Endothelial cell of umbilical vein (primary cell): ENCODE measurements at regions of chr1 and their contacts with region 1.

Region 1: GRCh38 chr1:19651141-19651737 is 7.1 kb downstream of the NBL1 start:
- DNase-seq: peak; percentile 49
- H3K4me3 ChIP-seq: no peak overlapping the region
- H3K27ac ChIP-seq: peak overlapping the region; percentile 65
- H3K4me1 ChIP-seq: peaks cover 14% of the 10 kb centered on the region
- H3K27me3 ChIP-seq: no peaks in the 10 kb centered on the region
- CTCF ChIP-seq: peak; percentile 78 to 85
- POLR2A ChIP-seq: no peak

Region 2: DNA sequence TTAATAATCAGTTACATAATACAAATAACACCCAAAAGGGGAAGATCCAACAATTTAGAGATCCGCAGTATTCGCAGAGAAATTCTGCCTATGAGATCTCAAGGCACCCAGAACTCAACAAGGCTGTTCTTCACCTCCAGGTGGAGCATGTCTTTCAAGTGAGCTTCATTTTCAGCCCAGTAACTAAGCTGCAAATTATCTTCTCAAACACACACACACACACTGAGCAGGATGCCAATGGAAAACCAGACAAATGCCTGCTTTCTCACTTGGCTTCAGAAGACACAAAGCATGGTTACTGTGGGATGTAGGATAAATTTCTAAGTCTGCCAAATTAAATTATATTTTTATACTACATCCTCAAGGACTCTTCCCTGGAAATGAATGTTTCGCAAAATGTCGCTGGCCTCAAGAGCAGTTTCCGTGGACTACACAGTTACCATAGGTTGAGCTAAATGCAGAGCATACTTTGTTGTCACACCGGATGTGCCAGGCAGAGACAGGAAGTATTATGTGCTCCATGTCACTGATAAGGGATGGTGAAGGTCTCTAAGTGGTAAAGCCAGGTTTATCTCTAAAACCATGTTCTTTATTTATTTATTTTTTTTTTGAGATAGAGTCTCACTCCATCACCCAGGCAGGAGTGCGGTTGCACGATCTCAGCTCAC is 471.5 kb before region 1 on chr1:
- CTCF ChIA-PET with region 1: interaction called, 13 read pairs
- POLR2A ChIA-PET with region 1: no interaction called
- dilution Hi-C with region 1: no loop called
- intact Hi-C with region 1: loop called (anchors 1 kb)
- DNase-seq: peak; percentile 39
- H3K4me3 ChIP-seq: no peak overlapping the region
- H3K27ac ChIP-seq: no peak overlapping the region
- H3K4me1 ChIP-seq: no peaks in the 10 kb centered on the region
- H3K27me3 ChIP-seq: no peaks in the 10 kb centered on the region
- CTCF ChIP-seq: peak in 1 of 2 donors; percentile 21
- POLR2A ChIP-seq: no peak

Region 3: DNA sequence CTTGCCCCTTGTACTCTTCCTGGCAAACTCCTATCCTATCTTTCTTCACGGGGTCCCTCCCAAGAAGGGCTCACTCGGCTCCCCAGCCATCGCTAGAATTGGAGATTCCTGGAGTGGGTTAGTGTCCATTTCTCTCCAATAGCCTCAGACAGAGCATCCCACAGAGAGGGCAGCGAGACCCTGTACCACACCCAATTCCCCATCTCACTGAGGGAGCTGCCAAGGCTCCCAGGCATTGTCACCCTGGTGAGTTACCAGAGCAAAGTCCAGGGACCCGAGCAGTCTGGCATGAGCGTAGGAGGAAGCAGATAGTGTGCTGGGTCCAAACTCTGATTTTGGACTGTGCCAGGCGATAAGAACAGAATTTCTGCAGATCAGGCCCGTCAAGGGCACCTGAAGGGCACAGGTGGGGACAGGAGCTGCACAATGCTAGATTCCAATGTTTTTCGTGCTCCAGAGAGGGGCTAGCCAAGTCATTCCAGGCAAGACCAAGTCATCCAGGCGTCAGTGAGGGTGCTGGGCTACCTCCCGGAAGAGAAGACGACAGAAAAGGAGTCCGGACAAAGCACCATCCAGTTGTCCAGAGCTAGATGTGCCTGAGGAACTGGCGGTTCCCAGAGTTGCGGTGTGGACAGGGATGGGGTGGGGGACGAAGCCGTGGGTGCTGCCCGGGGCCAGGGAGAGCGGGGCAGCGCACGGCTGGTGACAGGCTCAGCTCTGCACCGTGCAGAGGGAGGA is 378.0 kb before region 1 on chr1:
- CTCF ChIA-PET with region 1: interaction called, 6 read pairs
- POLR2A ChIA-PET with region 1: no interaction called
- dilution Hi-C with region 1: no loop called
- intact Hi-C with region 1: loop called (anchors 5 kb)
- DNase-seq: no peak
- H3K4me3 ChIP-seq: no peak overlapping the region
- H3K27ac ChIP-seq: no peak overlapping the region
- H3K4me1 ChIP-seq: no peaks in the 10 kb centered on the region
- H3K27me3 ChIP-seq: peaks cover 2 to 7% of the 10 kb centered on the region in 2 experiments
- CTCF ChIP-seq: no peak
- POLR2A ChIP-seq: no peak

Region 4: GRCh38 chr1:19363536-19364152 is 287.6 kb before region 1 on chr1:
- CTCF ChIA-PET with region 1: interaction called, 16 read pairs
- POLR2A ChIA-PET with region 1: no interaction called
- dilution Hi-C with region 1: no loop called
- intact Hi-C with region 1: no loop called
- DNase-seq: no peak
- H3K4me3 ChIP-seq: no peak overlapping the region
- H3K27ac ChIP-seq: no peak overlapping the region
- H3K4me1 ChIP-seq: no peaks in the 10 kb centered on the region
- H3K27me3 ChIP-seq: no peaks in the 10 kb centered on the region
- CTCF ChIP-seq: no peak
- POLR2A ChIP-seq: no peak

Region 5: DNA sequence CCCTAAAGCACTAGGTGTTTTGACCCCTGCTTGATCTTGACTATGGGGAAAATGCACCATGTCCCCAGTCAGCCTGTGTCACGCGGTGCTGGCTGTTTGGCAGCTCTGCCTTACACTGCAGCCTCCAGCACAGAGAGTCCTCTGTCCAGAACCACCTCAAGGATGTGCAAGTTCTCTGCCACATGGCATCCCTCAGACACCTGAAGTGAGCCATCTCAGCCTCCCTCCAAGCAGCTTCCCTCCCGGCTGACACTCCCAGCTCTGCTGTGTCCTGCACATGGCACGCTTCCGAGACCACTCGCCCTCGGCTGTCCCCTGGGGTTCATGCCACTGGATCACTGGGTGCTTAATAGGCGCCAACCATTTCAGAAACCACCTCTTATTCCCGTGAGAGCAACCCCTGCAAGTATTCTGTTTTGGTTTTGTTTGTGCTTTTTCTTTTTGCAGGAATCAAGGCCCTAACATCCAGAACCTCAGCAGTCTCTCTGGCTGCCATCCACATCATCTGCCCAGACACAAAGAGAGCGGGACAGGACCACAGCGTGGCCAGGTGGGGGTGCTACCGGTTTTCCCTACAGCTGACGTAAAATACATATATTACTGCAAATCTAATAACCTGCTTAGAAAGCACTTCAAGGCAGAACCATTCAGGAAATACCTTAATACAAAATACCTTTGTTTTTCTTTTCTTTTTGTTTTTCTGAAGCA is 211.6 kb before region 1 on chr1:
- CTCF ChIA-PET with region 1: interaction called, 12 read pairs
- POLR2A ChIA-PET with region 1: no interaction called
- dilution Hi-C with region 1: no loop called
- intact Hi-C with region 1: no loop called
- DNase-seq: peak; percentile 33
- H3K4me3 ChIP-seq: no peak overlapping the region
- H3K27ac ChIP-seq: no peak overlapping the region
- H3K4me1 ChIP-seq: peaks cover 52% of the 10 kb centered on the region
- H3K27me3 ChIP-seq: no peaks in the 10 kb centered on the region
- CTCF ChIP-seq: peak in 1 of 2 donors; percentile 26
- POLR2A ChIP-seq: no peak

Region 6: DNA sequence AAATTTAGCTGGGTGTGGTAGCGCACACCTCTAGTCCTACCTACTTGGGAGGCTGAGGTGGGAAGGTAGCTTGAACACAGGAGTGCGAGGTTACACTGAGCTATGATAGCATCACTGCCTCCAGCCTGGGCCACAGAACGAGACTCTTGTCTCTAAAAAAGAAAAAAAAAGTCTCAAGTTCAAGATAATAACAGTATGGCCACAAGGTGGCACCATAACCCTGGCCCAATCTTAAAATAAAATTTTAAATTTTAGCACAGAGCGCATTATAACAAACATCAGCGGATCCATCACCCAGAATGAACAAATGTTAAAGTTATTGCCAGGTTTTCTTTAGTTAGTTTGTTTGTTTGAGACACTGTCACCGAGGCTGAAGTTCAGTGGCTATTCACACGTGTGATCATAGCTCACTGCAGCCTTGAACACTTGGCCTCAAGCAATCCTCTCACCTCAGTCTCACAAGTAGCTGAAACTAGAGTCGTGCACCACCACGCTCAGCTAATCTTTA is 10.5 kb after region 1 on chr1:
- CTCF ChIA-PET with region 1: interaction called, 13 read pairs
- POLR2A ChIA-PET with region 1: no interaction called
- dilution Hi-C with region 1: no loop called
- intact Hi-C with region 1: no loop called
- DNase-seq: peak; percentile 57
- H3K4me3 ChIP-seq: no peak overlapping the region
- H3K27ac ChIP-seq: no peak overlapping the region
- H3K4me1 ChIP-seq: peaks cover 3% of the 10 kb centered on the region
- H3K27me3 ChIP-seq: peaks cover 26 to 38% of the 10 kb centered on the region in 2 experiments
- CTCF ChIP-seq: peak; percentile 36 to 56
- POLR2A ChIP-seq: no peak

Region 7: DNA sequence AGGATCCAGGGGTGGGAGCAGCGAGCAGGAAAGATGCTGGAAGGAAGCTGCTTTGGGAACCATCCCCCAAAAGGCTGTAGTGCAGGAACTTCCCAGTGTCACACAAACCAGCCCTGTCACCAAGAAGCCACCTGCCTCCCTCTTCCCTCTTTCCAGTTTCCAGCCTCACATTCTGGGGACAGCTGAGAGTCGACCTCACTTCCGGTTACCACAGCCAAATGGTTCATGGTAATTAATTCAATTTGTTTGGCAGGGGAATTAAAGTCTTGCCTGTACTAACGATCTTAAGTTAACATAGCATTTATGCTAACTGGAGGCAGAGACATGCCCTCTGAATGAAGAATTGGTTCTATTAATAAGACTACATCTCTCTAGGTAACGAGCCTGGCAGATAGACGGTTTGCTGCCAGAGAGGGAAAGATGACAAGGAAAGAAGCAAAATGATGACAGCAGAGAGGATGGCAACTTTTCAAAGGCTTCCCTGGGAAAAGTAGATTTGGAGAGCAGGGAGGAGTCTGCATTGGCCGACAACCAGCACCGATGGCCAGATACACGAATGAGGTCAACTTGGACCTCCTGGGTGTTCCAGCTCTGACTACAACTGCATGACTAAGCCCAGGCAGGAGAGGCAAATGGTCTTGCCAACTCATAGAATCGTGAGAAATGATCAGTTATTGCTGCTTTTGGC is 84.3 kb after region 1 on chr1:
- CTCF ChIA-PET with region 1: no interaction called
- POLR2A ChIA-PET with region 1: no interaction called
- dilution Hi-C with region 1: no loop called
- intact Hi-C with region 1: no loop called
- DNase-seq: no peak
- H3K4me3 ChIP-seq: no peak overlapping the region
- H3K27ac ChIP-seq: no peak overlapping the region
- H3K4me1 ChIP-seq: no peaks in the 10 kb centered on the region
- H3K27me3 ChIP-seq: no peaks in the 10 kb centered on the region
- CTCF ChIP-seq: no peak
- POLR2A ChIP-seq: no peak

Region 8: DNA sequence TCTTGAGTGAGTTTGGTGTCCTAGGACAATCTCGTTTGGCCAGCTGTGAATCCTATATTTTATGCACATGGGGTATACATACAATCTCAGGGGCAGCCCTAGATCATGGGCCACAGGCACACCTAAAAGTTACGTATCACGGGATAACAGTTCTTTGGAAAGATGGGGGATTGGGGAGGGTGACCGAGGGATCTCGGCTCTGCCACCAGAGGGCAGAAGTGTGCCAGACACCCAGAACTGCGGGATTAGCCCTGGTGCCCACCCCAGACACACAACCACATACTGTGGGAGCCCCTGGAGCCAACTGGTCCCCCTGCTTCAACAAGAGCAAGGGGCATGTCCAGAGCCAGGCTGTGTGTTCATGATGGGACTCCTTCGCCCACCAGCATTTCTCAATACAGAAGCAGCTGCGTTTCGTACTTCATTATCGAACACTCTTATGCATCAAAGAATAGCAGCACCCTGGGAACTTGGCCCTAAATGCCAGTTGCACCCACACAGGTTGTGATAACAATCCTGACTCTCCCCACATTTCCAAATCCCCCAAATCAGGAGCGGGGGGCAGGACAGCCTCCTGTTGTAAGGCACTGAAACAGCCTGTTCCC is 111.0 kb after region 1 on chr1:
- CTCF ChIA-PET with region 1: no interaction called
- POLR2A ChIA-PET with region 1: no interaction called
- dilution Hi-C with region 1: no loop called
- intact Hi-C with region 1: no loop called
- DNase-seq: peak; percentile 50
- H3K4me3 ChIP-seq: no peak overlapping the region
- H3K27ac ChIP-seq: no peak overlapping the region
- H3K4me1 ChIP-seq: peaks cover 20% of the 10 kb centered on the region
- H3K27me3 ChIP-seq: no peaks in the 10 kb centered on the region
- CTCF ChIP-seq: peak; percentile 83 to 86
- POLR2A ChIP-seq: no peak